Activated CD8-positive, alpha-beta T cell treated with anti-CD3 and anti-CD28 coated beads, Interleukin-2, amount 10 ng/mL, durations not matched to agents 7 days and 5 days (primary cell): ENCODE measurements at regions of chr9 and their contacts with region 1.

Region 1: GRCh38 chr9:137223078-137223970 is 1.3 kb upstream of the RNF208 start:
- DNase-seq: peak; percentile 98
- ATAC-seq: peak; percentile 90
- H3K4me3 Mint-ChIP-seq: peak overlapping the region; percentile 80
- H3K27ac Mint-ChIP-seq: peak overlapping the region; percentile 87
- H3K4me1 Mint-ChIP-seq: peaks cover 19% of the 10 kb centered on the region
- H3K27me3 Mint-ChIP-seq: no peaks in the 10 kb centered on the region

Region 2: DNA sequence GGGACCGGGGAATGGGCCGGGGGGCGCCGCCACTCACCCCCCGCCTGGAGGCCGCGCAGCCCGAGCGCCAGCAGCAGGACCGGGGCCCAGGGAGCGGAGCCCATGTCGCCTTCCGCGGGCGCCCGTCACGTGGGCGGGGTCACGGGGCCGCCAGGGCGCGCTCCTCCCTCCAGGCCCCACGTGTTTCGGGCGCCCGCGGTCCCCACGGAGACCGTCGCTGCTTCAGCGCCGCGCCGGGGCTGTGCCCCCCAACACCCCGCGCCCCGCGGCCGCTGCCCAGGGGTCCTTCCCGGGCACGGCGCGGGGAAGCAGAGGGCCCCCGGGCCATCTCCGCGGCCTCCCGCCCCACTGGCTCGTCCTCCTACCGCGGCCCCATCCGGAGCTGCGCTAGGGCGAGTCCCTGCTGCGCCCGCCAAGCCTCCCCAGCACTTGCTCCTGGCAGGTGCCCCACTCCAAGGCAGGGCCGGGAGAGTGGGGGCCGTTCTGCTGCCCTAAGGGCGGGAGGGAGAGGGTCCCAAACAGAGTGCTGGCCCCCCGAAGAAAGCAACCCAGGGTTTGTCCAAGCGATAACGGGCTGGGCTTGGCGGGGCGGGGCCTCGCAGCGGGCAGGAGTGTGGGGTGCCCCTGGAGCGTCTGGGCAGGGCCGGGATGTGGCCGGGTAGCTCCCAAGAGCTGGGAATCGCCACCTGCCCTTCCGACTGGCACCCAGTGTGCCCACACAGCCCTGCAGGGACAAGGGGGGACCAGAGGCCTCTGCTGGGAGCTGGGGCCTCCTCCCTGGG is 108.5 kb before region 1 on chr9 and contains the start of gene DPP7:
- CTCF ChIA-PET with region 1: interaction called, 21 read pairs
- POLR2A ChIA-PET with region 1: interaction called, 3 read pairs
- DNase-seq: peak; percentile 85
- ATAC-seq: peak; percentile 96
- H3K4me3 Mint-ChIP-seq: peak within 1 kb of the TSS; percentile 74
- H3K27ac Mint-ChIP-seq: peak within 1 kb of the TSS; percentile 73
- H3K4me1 Mint-ChIP-seq: peaks cover 11% of the 10 kb centered on the region
- H3K27me3 Mint-ChIP-seq: no peaks in the 10 kb centered on the region
- total RNA-seq, gene DPP7: 248 TPM

Region 3: DNA sequence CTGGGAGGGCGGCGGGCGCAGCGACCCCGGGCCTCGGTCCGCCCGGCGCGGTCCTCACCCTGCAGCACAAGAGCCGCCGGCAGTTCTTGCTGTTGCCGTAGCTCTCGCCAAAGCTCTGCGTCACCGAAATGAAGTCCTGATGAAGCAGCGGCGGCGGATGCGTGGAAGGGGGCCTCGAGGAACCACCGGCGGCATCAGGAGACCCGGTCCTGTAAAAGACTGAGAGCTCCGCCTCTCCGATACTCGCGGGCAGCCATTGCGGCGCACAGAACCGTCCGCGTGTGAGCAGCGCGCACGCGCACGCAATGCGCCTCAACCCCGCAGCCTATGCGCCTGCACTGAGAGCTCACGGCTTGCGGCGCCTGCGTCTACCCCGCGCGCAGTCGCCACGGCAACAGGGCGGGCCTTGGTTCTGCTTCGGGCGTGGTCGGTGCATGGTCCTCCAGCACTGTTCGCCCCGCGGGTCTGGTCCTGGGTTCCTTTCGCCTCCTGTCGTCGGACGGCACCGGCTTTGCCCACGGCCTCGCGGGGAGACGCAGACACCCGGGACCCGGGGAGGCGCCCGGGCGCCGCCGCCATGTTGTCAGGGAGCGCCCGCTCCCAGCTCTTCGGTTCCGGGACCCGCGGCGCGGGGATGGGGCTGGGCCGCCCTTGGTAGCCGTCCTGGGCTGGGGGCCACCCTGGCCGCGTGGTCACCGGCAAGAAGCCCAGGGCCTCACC is 93.7 kb before region 1 on chr9:
- CTCF ChIA-PET with region 1: interaction called, 7 read pairs
- POLR2A ChIA-PET with region 1: interaction called, 11 read pairs
- DNase-seq: peak; percentile 93
- ATAC-seq: peak; percentile 95
- H3K4me3 Mint-ChIP-seq: peak overlapping the region; percentile 83
- H3K27ac Mint-ChIP-seq: peak overlapping the region; percentile 82
- H3K4me1 Mint-ChIP-seq: peaks cover 31% of the 10 kb centered on the region
- H3K27me3 Mint-ChIP-seq: peaks cover 7% of the 10 kb centered on the region

Region 4: DNA sequence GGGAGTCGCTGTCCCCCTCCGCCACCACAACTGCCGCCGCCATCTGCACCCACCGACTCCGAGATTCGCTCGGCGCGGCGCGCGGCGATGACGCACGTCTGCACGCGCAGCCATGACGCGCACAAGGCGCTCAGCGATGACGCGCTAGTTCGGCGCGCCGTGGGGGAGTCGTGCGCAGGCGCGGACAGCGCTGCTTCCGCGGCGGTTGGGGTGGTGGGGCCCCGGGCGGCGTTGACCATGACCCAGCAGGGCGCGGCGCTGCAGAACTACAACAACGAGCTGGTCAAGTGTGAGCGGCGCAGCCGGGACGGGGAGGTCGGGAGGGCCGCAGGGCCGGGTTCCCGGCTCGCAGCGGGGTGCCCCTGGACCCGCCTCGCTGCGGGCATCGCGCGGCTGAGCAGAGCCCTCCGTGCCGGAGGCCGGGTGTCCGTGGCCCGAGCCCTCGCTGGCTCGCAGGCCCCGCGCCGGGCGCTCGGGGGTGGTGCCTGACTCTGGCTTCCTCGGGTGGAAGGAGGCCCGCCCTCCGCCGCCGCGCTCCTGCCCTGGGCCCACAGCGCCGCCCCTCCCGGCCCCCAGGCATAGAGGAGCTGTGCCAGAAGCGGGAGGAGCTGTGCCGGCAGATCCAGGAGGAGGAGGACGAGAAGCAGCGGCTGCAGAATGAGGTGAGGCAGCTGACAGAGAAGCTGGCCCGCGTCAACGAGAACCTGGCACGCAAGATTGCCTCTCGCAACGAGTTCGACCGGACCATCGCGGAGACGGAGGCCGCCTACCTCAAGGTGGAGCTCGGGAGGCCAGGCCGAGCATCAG is 34.6 kb before region 1 on chr9 and contains the starts of genes ANAPC2 and SSNA1:
- CTCF ChIA-PET with region 1: interaction called, 23 read pairs
- POLR2A ChIA-PET with region 1: interaction called, 28 read pairs
- DNase-seq: peak; percentile 93
- ATAC-seq: peak; percentile 81
- H3K4me3 Mint-ChIP-seq: peak within 1 kb of the TSS; percentile 97
- H3K27ac Mint-ChIP-seq: peak within 1 kb of the TSS; percentile 97
- H3K4me1 Mint-ChIP-seq: peaks cover 42% of the 10 kb centered on the region
- H3K27me3 Mint-ChIP-seq: no peaks in the 10 kb centered on the region
- total RNA-seq, gene ANAPC2: 60.2 to 64.1 TPM
- total RNA-seq, gene SSNA1: 88.2 to 90.0 TPM

Region 5: DNA sequence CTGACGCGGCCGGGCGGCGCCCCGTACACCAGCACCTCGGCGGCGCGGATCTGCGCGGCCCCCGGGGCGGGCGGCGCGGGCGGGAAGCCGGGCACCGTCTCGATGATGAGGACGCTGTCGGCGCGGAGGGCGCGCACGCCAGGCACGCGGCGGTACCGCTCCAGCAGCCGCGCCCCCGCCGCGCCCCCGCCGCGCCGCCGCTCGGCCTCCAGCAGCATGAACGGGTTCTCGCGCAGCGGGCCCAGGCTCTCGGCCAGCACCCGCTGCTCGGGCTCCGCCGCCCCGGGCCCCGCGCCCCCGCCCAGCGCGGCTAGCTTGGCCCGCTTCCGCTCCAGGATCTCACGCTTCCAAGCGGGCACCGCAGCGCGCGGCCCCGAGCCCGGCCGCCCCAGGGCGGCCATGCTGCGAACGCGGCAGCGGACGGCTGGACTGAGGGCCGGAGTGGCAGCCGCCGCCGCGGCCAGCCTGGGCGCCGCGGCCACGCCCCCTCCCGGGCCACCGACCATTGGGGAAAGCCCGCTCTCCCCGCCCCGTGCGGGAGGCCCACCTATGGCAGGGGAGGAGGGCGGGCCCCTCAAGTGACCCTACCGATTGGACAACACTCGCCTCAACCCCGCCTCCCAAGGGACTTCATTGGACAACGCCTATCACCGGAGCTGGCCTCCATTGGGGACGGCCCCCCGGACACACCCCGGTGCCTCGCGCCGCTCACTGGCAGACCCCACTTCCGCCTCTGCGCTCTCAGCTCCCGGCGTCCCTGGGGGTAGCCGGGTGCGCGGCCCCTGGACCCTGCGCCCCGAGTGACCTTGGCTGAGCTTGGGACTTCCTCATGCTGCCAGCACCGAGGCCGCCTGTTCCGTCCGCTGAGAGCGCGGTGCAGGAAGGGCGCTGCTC is 22.8 kb before region 1 on chr9 and contains the start of gene TPRN:
- CTCF ChIA-PET with region 1: interaction called, 3 read pairs
- POLR2A ChIA-PET with region 1: interaction called, 12 read pairs
- DNase-seq: peak; percentile 99
- ATAC-seq: peak; percentile 97
- H3K4me3 Mint-ChIP-seq: peak within 1 kb of the TSS; percentile 86
- H3K27ac Mint-ChIP-seq: peak within 1 kb of the TSS; percentile 86
- H3K4me1 Mint-ChIP-seq: peaks cover 39% of the 10 kb centered on the region
- H3K27me3 Mint-ChIP-seq: no peaks in the 10 kb centered on the region
- total RNA-seq, gene TPRN: 10.9 to 12.0 TPM